WTC11 (cell line): ENCODE measurements at regions of chr19 and their contacts with region 1.

Region 1: GRCh38 chr19:54023191-54023590 is 31.8 kb downstream of the CACNG6 start:
- DNase-seq: no peak
- ATAC-seq: no peak
- H3K4me3 Mint-ChIP-seq: no peak overlapping the region
- H3K27ac Mint-ChIP-seq: no peak overlapping the region
- H3K4me1 Mint-ChIP-seq: peaks cover 14% of the 10 kb centered on the region
- H3K27me3 Mint-ChIP-seq: peaks cover 14% of the 10 kb centered on the region
- CTCF ChIP-seq: no peak

Region 2: DNA sequence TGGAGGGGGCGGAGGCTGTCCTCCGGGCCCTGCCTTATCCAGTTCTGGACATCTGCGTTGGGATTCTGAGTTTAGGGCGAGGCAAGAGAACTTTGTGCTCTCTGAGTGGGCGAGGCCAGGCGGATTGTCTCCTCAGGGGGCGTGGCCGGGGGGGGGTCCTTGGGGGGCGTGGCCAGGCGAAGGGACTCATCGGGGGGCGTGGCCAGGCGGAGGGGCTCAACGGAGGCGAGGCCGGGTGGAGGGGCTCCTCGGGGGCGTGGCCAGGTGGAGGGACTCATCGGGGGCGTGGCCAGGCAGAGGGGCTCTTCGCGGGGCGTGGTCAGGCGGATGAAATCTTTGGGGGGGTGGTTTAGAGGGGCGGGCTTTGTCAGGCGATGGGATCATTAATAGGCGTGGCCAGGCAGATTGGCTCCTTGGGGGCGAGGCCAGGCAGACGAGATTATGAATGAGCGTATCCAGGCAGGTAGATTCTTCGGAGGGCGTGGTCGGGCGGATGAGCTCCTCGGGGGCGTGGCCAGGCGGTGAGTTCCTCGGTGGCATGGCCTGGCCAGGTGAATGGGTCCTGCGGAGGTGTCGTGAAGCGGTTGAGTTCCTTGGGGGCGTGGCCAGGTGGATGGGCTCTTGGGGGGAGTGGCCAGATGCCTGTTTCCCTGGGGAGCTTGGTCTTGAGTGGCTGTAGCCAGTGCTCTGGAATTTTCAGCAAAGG is 124.4 kb before region 1 on chr19:
- CTCF ChIA-PET with region 1: interaction called, 16 read pairs
- POLR2A ChIA-PET with region 1: no interaction called
- DNase-seq: peak; percentile 100
- ATAC-seq: peak; percentile 92
- H3K4me3 Mint-ChIP-seq: peak overlapping the region; percentile 81
- H3K27ac Mint-ChIP-seq: peak overlapping the region; percentile 100
- H3K4me1 Mint-ChIP-seq: peaks cover 33% of the 10 kb centered on the region
- H3K27me3 Mint-ChIP-seq: 0 out of 2 replicates have a peak, but pooled peaks cover 9% of the 10 kb centered on the region
- CTCF ChIP-seq: no peak

Region 3: DNA sequence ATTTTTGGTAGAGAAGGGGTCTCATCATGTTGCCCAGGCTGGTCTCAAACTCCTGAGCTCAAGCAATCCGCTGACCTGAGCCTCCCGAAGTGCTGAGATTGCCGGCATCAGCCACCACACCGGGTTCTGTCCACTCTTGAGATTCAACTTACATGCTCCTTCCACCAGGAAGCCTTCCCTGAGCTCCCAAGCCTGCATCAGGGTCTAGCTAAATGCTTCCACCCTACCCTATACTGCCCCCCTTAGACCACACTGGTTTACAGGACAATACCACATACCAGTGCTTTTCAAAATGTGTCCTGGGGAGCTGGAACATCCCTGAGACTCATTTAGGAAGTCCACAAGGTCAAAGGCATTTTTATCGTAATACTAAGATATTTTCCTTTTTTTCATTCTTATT is 75.6 kb before region 1 on chr19:
- CTCF ChIA-PET with region 1: interaction called, 54 read pairs
- POLR2A ChIA-PET with region 1: interaction called, 7 read pairs
- DNase-seq: no peak
- ATAC-seq: peak; percentile 83
- H3K4me3 Mint-ChIP-seq: no peak overlapping the region
- H3K27ac Mint-ChIP-seq: no peak overlapping the region; the same call in 1 of the 2 replicates
- H3K4me1 Mint-ChIP-seq: peaks cover 42% of the 10 kb centered on the region
- H3K27me3 Mint-ChIP-seq: no peaks in the 10 kb centered on the region
- CTCF ChIP-seq: no peak

Region 4: GRCh38 chr19:53982611-53983010 is 40.6 kb before region 1 on chr19:
- CTCF ChIA-PET with region 1: interaction called, 48 read pairs
- POLR2A ChIA-PET with region 1: interaction called, 11 read pairs
- DNase-seq: peak; percentile 62
- ATAC-seq: no peak
- H3K4me3 Mint-ChIP-seq: no peak overlapping the region
- H3K27ac Mint-ChIP-seq: no peak overlapping the region
- H3K4me1 Mint-ChIP-seq: peaks cover 11% of the 10 kb centered on the region
- H3K27me3 Mint-ChIP-seq: peaks cover 4% of the 10 kb centered on the region; the same call in 1 of the 2 replicates
- CTCF ChIP-seq: no peak

Region 5: GRCh38 chr19:54011507-54012211 is 11.5 kb before region 1 on chr19:
- CTCF ChIA-PET with region 1: interaction called, 26 read pairs
- POLR2A ChIA-PET with region 1: no interaction called
- DNase-seq: peak; percentile 68
- ATAC-seq: peak; percentile 91
- H3K4me3 Mint-ChIP-seq: peak overlapping the region; percentile 50
- H3K27ac Mint-ChIP-seq: peak overlapping the region; percentile 66
- H3K4me1 Mint-ChIP-seq: peaks cover 27% of the 10 kb centered on the region
- H3K27me3 Mint-ChIP-seq: peaks cover 15% of the 10 kb centered on the region
- CTCF ChIP-seq: no peak

Region 6: DNA sequence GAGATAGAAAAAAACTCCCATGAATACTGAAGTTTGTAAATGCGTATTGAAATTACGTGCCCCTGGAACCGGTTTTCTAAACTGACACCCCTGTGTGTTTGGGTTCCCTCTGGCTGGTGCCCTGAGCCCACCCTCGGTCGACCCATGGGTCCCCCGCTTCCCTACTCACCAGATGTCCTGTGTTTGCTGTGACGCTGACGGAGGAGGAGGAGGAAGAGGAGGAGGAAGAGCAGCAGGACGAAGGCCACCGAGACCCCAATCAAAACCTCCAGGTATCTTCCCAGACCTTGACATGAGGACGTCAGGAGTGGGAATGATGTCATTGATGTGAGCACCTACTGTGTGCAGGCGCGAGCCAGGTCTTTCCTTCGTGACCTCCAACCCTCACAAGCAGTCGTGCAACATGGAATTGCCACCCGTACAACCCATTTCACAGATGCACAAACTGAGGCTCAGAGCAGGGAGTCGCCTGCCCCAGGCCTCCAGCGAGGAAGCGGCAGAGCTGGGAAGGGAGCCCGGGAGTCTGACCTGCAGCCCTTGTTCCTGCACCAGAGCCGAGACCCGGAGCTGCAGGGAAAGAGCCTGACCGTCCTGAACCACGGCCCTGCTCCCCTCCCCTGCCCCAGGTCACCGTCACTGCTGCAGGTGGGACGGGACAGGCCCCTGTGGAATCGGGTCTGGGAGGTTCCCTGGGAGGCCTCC is 195.9 kb after region 1 on chr19:
- CTCF ChIA-PET with region 1: no interaction called
- POLR2A ChIA-PET with region 1: no interaction called
- DNase-seq: no peak
- ATAC-seq: no peak
- H3K4me3 Mint-ChIP-seq: no peak overlapping the region
- H3K27ac Mint-ChIP-seq: no peak overlapping the region
- H3K4me1 Mint-ChIP-seq: peaks cover 13% of the 10 kb centered on the region
- H3K27me3 Mint-ChIP-seq: no peaks in the 10 kb centered on the region
- CTCF ChIP-seq: no peak